ENCODE measurements at regions of chr2 and their contacts with region 1.

Region 1: GRCh38 chr2:113157118-113157896 is 16.5 kb upstream of the PSD4 start:
- DNase-seq: peak in 4 of 5 donors; percentile 30 to 66 (median 48)
- H3K4me3 ChIP-seq: peak overlapping the region; percentile 71
- H3K4me3 Mint-ChIP-seq: peak overlapping the region; percentile 85 to 94 (median 90)
- H3K27ac ChIP-seq: peak overlapping the region; percentile 24
- H3K27ac Mint-ChIP-seq: peak overlapping the region in 7 of 8 donors; percentile 22 to 92 (median 81)
- H3K4me1 ChIP-seq: peaks cover 25% of the 10 kb centered on the region
- H3K4me1 Mint-ChIP-seq: peaks cover 17 to 31% (median 27%) of the 10 kb centered on the region in 3 donors
- H3K27me3 ChIP-seq: no peaks in the 10 kb centered on the region
- H3K27me3 Mint-ChIP-seq: no peaks in the 10 kb centered on the region

Region 2: GRCh38 chr2:113167115-113167932 is 10.0 kb after region 1 on chr2:
- CTCF ChIA-PET with region 1: interaction called, 22 read pairs
- POLR2A ChIA-PET with region 1: interaction called, 13 read pairs
- DNase-seq: peak in 2 of 5 donors; percentile 50 to 58
- H3K4me3 ChIP-seq: peak overlapping the region; percentile 57
- H3K4me3 Mint-ChIP-seq: peak overlapping the region; percentile 1 to 75 (median 63)
- H3K27ac ChIP-seq: no peak overlapping the region
- H3K27ac Mint-ChIP-seq: peak overlapping the region; percentile 79 to 98 (median 92)
- H3K4me1 ChIP-seq: peaks cover 65% of the 10 kb centered on the region
- H3K4me1 Mint-ChIP-seq: peaks cover 56 to 76% (median 74%) of the 10 kb centered on the region in 3 donors
- H3K27me3 ChIP-seq: no peaks in the 10 kb centered on the region
- H3K27me3 Mint-ChIP-seq: no peaks in the 10 kb centered on the region

Region 3: GRCh38 chr2:113173542-113174395 is 16.5 kb after region 1 on chr2 and contains the start of gene PSD4:
- CTCF ChIA-PET with region 1: interaction called, 22 read pairs
- POLR2A ChIA-PET with region 1: interaction called, 40 read pairs
- DNase-seq: peak; percentile 77 to 94 (median 91)
- H3K4me3 ChIP-seq: peak within 1 kb of the TSS; percentile 88
- H3K4me3 Mint-ChIP-seq: peak within 1 kb of the TSS; percentile 89 to 95 (median 93)
- H3K27ac ChIP-seq: peak within 1 kb of the TSS; percentile 77
- H3K27ac Mint-ChIP-seq: peak within 1 kb of the TSS; percentile 86 to 98 (median 94)
- H3K4me1 ChIP-seq: peaks cover 76% of the 10 kb centered on the region
- H3K4me1 Mint-ChIP-seq: peaks cover 70 to 87% (median 76%) of the 10 kb centered on the region in 3 donors
- H3K27me3 ChIP-seq: no peaks in the 10 kb centered on the region
- H3K27me3 Mint-ChIP-seq: peaks cover 0 to 3% of the 10 kb centered on the region in 2 donors
- total RNA-seq, gene PSD4: 192 to 193 TPM

Measured in CD8-positive, alpha-beta memory T cell (primary cell).